ENCODE measurements at regions of chr1 and their contacts with region 1.

Region 1: GRCh38 chr1:173429471-173430402 is 47.4 kb upstream of the PRDX6 start:
- DNase-seq: peak; percentile 86
- H3K4me3 Mint-ChIP-seq: peak overlapping the region; percentile 42
- H3K27ac Mint-ChIP-seq: peak overlapping the region; percentile 43
- H3K4me1 Mint-ChIP-seq: peaks cover 16% of the 10 kb centered on the region
- H3K27me3 Mint-ChIP-seq: no peaks in the 10 kb centered on the region

Region 2: DNA sequence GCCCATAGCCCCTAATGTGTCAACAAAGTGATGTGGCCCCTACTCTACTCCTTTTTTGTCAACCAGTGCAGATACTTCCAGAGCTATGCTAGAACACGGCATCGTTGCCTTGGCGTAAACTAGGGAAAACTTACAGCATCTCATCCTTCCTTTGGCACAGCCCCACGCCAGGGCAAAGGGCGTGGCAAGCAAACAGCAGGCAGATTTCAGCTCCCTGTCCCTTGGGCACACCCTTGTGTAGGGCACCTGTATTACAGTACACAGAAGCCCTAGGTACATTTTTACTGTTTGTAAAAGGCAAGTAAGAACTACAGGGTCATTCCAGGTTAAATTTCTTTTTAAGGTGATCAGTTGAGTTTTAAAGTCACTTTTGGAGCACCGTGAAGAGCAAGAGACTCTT is 76.7 kb after region 1 on chr1:
- CTCF ChIA-PET with region 1: no interaction called
- intact Hi-C with region 1: loop called (anchors 1 kb)
- DNase-seq: peak; percentile 7
- H3K4me3 Mint-ChIP-seq: no peak overlapping the region
- H3K27ac Mint-ChIP-seq: no peak overlapping the region
- H3K4me1 Mint-ChIP-seq: no peaks in the 10 kb centered on the region
- H3K27me3 Mint-ChIP-seq: no peaks in the 10 kb centered on the region

Region 3: DNA sequence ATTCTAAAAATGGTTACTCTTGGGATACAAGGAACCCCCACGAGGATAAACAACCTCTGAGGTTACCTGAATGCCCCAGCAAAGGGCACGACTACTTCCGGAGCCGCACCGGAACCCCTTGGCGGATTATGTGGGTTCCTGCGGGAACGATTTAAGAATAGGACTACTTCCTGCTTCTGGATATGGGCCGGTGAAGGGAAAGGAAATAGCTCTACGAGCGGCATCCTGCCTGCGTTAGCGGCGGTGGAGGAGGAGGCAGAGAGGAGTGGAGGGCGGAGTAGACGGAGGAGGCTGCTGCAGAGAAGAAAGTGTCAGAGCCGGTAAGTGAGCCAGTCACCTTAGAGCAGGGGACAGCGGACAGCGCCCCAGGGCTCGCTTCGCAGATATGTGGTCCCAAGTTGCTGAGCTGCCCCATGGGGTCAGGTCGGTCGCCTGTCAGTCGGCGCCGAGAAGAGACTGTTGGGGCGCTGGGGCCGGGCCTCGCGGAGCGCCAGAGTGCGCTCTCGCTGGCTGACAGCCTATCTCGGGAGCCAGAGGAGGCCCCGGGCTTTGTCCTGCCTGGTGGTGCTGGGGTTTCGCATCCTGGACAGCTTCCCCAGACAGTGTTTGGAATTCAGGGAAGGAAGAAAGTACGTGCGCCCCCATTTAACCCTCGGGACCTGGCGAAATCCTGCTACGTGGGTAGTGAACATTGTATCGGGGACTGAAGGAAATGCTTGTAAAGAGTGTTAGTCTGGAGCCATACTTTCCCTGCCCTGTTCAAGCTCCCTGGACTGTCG is 285.2 kb after region 1 on chr1 and contains the start of gene KLHL20:
- CTCF ChIA-PET with region 1: interaction called, 4 read pairs
- intact Hi-C with region 1: loop called (anchors 1 kb)
- DNase-seq: peak; percentile 91
- H3K4me3 Mint-ChIP-seq: peak within 1 kb of the TSS; percentile 97
- H3K27ac Mint-ChIP-seq: peak within 1 kb of the TSS; percentile 96
- H3K4me1 Mint-ChIP-seq: peaks cover 9% of the 10 kb centered on the region
- H3K27me3 Mint-ChIP-seq: peaks cover 15% of the 10 kb centered on the region
- total RNA-seq, gene KLHL20: 13.0 to 14.9 TPM

Region 4: DNA sequence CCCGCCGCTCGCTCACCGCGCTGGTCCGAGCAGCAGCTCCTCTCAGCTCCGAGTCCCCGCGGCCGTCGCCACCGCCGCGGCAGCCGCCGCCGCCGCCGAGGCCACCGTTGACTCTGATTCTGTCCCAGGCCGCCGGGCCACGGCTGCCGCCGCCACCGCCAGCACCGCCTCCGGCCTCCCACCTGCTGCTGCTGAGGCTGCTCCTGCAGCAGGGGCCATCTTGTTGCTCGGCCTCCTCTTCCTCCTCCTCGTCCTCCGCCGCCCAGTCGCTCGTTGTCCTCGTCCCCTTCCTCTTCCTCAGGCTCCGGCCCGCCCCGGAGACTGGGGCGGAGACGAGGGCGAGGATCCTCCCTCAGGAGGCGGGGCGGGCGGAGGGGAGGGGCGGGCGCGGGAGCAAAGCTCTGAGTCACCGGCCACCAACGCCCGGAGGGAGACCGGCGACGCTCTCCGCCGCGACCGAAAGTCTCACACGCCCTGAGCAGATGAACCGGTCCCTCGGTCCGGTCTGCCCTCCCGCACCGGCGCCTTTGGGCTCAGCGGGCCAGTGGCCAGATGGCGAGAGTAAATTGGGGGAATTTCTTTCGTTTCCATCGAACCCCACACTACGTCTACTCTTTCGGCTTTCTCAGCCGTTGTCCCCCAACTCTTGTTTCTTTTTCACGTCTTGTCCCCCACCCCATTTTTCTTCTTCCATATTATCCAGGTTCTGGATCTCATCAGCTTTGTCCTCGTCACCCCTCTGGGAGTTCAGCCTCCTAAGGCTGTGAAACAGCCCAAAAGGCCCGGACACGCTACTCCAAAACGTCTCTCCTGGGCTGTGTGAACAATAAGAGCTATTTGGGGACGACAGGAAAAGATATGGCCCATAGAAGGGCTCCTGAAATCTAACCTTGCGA is 592.6 kb after region 1 on chr1 and contains the start of gene RC3H1:
- CTCF ChIA-PET with region 1: no interaction called
- intact Hi-C with region 1: loop called (anchors 1 kb)
- DNase-seq: peak; percentile 92
- H3K4me3 Mint-ChIP-seq: peak within 1 kb of the TSS; percentile 93
- H3K27ac Mint-ChIP-seq: peak within 1 kb of the TSS; percentile 94
- H3K4me1 Mint-ChIP-seq: peaks cover 32% of the 10 kb centered on the region
- H3K27me3 Mint-ChIP-seq: no peaks in the 10 kb centered on the region
- total RNA-seq, gene RC3H1: 24.2 to 27.1 TPM

Region 5: DNA sequence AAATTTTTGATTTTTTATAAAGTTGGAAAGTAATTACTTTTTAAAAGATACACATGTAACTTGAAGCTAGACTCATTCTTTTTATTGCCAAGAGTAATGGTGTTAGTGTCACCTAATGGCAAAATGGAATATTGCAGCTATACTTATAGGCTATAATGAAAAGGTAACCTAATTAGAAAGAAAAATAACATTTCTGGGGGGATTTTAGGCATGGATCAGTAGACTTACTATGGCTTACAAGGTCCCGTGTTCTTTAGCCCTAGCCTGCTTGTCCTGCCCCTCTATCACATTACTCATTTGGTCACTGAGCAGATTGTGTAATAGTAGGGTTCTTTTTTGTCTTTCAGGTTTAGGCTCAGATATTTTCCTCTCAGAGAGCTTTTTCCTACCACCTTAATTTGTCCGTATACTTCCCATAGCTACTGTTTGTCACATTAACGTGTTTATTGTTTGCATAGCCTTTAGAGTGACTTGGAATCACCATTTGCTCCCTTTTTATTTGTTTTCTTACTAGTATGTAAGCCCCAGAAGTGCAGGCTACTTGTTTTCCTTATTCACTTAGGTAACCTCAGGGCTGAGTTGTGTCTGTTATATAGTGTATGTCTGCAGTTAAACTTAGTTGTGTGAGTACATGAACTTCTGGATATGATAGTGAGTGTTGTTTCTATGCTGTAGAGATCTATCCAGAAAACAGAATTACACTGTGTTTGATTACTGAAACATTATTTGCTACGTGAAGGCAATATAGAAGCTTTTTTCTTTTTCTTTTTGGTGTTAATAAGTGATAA is 788.2 kb after region 1 on chr1:
- CTCF ChIA-PET with region 1: no interaction called
- intact Hi-C with region 1: loop called (anchors 1 kb)
- DNase-seq: no peak
- H3K4me3 Mint-ChIP-seq: no peak overlapping the region
- H3K27ac Mint-ChIP-seq: no peak overlapping the region
- H3K4me1 Mint-ChIP-seq: peaks cover 6% of the 10 kb centered on the region
- H3K27me3 Mint-ChIP-seq: no peaks in the 10 kb centered on the region

Measured in activated naive CD4-positive, alpha-beta T cell treated with anti-CD3 and anti-CD28 coated beads for 36 hours (primary cell).